Colonic mucosa (tissue), 4 donors: ENCODE measurements at regions of chr2 and their contacts with region 1.

Region 1: DNA sequence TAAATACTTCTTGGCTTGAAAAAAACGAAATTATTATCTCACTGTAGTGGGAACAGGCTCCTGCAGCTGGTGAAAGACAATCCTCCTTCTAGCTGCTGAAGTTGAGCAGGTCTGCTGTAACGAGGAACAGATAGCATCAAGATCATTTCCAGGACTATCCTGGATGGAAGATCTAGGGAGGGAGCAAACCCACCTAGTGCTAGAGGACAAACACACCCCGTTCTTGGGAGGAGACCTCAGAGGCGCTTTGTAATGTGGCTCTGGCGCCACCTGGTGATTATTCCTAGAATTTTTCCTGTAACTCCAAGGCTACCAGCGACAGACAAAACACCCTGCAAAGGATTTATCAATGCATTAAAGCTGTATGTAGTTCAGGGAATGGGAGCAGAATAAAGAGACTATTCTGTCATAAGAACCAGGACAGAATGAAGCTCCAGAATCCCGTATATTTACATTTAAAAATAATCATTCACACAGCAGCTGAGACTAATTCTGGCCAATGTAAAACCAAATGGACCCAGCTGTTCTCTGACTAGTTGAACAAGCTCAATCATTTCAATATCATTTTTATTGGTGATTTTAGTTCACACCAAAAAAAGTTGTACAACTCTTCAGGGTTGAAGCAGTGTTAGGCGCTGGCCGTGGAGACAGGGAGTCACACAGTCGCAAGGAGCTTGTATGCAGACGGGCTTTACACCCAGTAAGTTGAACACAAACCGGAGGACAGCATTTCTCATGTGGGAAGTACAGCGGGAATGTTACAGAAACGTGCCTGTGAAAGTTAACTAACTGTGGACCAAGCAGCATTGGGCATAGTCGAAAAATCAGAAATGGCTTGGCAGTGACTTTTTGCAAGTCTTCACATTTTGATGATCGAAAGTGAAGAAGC is 290.3 kb downstream of the TRIB2 start:
- DNase-seq: peak; percentile 50
- H3K4me3 ChIP-seq: no peak overlapping the region
- H3K27ac ChIP-seq: no peak overlapping the region
- H3K4me1 ChIP-seq: no peaks in the 10 kb centered on the region
- H3K27me3 ChIP-seq: no peaks in the 10 kb centered on the region
- CTCF ChIP-seq: peak; percentile 86

Region 2: GRCh38 chr2:11829947-11830707 is 1176.9 kb before region 1 on chr2:
- intact Hi-C with region 1: loop called (anchors 10 kb)
- DNase-seq: peak; percentile 70
- H3K4me3 ChIP-seq: no peak overlapping the region
- H3K27ac ChIP-seq: peak overlapping the region; percentile 57
- H3K4me1 ChIP-seq: peaks cover 8% of the 10 kb centered on the region
- H3K27me3 ChIP-seq: no peaks in the 10 kb centered on the region
- CTCF ChIP-seq: no peak

Region 3: DNA sequence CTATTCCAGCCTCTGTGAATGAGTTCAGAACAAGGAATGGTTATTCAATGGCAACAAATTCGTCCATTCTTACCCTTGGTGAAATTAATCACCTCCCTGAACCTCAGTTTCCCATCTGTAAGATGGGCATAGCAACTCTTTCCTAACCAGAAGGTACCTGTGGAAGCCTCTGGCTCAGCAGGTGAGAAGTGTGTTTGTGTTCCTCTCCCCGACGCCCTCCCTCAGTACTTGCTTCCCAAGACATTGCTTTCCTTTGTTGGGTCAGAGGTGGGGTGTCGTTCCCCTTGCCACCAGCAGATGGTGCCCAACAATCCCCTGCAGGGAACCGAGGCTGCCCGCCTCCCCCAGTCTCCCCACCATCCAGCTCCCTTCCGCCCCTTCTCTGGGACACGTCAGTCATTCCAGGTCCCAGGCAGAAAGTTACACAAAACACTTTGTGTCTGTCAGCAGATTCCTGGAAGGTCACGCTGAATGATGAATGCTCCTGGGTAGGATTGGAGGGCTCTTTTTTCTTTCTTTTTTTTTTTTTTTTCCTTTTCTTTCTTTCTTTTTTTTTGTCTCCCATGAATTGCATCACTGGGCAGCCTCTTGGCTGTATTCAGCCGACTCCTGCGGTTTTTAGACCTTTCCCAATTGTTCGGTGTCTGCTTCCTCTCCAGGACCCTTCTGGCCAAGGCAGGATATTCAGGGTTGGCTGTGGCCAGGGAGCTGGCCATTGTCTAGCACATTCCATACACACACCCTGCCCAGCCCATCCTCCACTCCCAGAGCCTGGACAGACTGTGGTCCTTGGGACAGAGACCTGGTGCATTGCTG is 1143.4 kb before region 1 on chr2:
- intact Hi-C with region 1: loop called (anchors 2 kb)
- DNase-seq: peak; percentile 68
- H3K4me3 ChIP-seq: no peak overlapping the region
- H3K27ac ChIP-seq: no peak overlapping the region
- H3K4me1 ChIP-seq: no peaks in the 10 kb centered on the region
- H3K27me3 ChIP-seq: no peaks in the 10 kb centered on the region
- CTCF ChIP-seq: peak; percentile 94

Region 4: DNA sequence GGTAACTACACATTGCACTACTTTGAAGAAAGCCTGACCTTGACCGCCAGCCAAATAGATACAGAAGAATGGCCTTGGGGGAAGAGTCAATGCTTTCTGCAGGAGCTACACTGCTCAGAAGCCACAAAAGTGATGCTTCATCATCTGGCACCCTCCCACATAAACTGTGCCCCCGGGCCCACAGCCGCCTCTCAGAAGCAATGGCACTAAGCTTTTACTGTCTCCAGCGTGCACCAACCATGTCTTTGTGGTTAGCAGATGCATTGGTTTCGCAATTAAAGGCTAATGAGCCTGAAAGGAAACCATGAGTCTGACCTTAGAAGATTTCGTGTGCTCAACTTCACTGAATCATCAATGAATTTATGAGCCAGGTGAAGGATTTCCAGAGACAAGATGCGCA is 499.8 kb before region 1 on chr2:
- intact Hi-C with region 1: no loop called
- DNase-seq: no peak
- H3K4me3 ChIP-seq: no peak overlapping the region
- H3K27ac ChIP-seq: no peak overlapping the region
- H3K4me1 ChIP-seq: no peaks in the 10 kb centered on the region
- H3K27me3 ChIP-seq: no peaks in the 10 kb centered on the region
- CTCF ChIP-seq: no peak

Region 5: DNA sequence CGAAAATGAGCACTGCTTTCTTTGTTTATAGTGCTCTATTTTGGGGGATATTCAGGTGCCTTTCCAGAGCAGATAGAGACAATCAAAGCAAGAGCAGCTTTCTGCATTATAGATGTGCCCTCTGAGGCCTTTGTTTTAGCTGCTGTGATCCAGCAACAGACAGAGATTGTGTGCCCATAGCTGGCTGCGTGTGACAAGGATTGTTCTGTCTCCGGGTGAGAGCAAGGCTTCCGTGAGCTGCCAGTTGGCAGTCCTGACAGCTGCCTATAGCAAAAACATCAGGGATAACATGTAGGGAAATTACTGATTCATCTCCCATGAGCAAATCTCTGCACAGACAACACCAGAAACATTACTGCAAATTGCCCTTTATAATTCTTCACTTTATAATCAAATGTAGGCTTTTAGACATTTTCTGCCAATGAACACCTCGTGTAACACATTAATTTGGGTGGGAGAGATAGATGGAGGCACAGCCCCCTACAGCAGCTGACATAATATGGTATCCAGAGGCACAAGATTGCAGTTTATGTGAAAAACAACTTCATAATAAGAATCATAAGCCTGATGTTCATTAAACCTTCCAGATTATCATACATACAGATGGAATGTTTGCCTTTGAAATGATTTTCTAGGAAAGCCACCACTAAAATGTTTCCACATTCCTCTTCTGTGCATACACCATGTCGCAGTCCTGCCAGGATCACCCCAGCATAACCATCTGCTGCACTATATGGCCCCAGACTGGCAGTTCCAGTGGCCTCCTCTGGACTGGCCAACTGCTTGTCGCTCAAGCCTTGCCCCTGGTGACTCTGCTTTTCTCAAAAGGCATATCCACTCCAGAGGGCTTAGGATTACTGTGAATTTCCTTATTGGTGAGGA is 159.1 kb before region 1 on chr2:
- intact Hi-C with region 1: no loop called
- DNase-seq: no peak
- H3K4me3 ChIP-seq: no peak overlapping the region
- H3K27ac ChIP-seq: no peak overlapping the region
- H3K4me1 ChIP-seq: no peaks in the 10 kb centered on the region
- H3K27me3 ChIP-seq: no peaks in the 10 kb centered on the region
- CTCF ChIP-seq: no peak